PC-3 (cell line): ENCODE measurements at regions of chr1 and their contacts with region 1.

Region 1: DNA sequence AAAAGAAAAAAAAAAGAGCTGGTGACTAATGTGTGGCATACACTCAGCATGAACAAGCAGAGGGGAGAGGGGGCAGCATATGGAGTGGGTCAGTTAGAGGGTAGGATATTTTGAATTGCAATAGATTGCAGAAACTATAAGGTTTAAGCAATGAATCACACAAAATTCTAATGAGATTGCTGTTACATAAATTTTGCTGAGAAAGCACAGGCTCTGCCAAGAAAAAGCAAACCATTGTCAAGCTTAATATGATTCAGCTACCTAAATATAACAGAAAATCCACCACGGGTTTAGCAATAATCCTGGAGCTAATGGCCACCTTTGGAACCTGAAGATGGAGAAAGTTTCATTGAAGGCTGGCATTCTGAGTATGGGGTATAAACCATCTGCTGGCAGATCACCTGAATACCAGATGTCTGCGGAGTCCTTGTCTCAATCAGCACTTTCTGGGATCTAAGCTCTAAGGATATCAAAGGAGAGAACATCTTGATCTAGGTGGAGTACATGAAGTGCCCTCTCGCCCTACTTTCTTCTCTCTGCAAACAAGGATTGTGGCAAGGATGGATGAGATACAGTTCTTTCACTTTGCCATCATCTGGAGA is 30.3 kb upstream of the ANGPTL7 start:
- DNase-seq: peak; percentile 92
- ATAC-seq: peak; percentile 77
- H3K4me3 ChIP-seq: no peak overlapping the region
- H3K27ac ChIP-seq: peak overlapping the region; percentile 86
- H3K4me1 ChIP-seq: peaks cover 39% of the 10 kb centered on the region
- H3K27me3 ChIP-seq: no peaks in the 10 kb centered on the region
- CTCF ChIP-seq: no peak

Region 2: GRCh38 chr1:11012250-11013171 is 146.3 kb before region 1 on chr1 and contains the start of gene TARDBP:
- CTCF ChIA-PET with region 1: no interaction called
- POLR2A ChIA-PET with region 1: no interaction called
- intact Hi-C with region 1: no loop called
- DNase-seq: peak; percentile 83
- ATAC-seq: peak; percentile 89
- H3K4me3 ChIP-seq: peak within 1 kb of the TSS; percentile 95
- H3K27ac ChIP-seq: peak within 1 kb of the TSS; percentile 81
- H3K4me1 ChIP-seq: peaks cover 15% of the 10 kb centered on the region
- H3K27me3 ChIP-seq: no peaks in the 10 kb centered on the region
- CTCF ChIP-seq: no peak
- total RNA-seq, gene TARDBP: 78.5 and 102 TPM in 2 replicates

Region 3: GRCh38 chr1:11099310-11100149 is 59.3 kb before region 1 on chr1 and contains the start of gene EXOSC10:
- CTCF ChIA-PET with region 1: interaction called, 3 read pairs
- POLR2A ChIA-PET with region 1: no interaction called
- intact Hi-C with region 1: loop called (anchors 2 kb)
- DNase-seq: peak; percentile 91
- ATAC-seq: peak; percentile 93
- H3K4me3 ChIP-seq: peak within 1 kb of the TSS; percentile 81
- H3K27ac ChIP-seq: peak within 1 kb of the TSS; percentile 44
- H3K4me1 ChIP-seq: peaks cover 16% of the 10 kb centered on the region
- H3K27me3 ChIP-seq: no peaks in the 10 kb centered on the region
- CTCF ChIP-seq: no peak
- total RNA-seq, gene EXOSC10: 95.9 and 96.3 TPM in 2 replicates

Region 4: GRCh38 chr1:11114966-11115365 is 43.9 kb before region 1 on chr1:
- CTCF ChIA-PET with region 1: no interaction called
- POLR2A ChIA-PET with region 1: no interaction called
- intact Hi-C with region 1: no loop called
- DNase-seq: no peak
- ATAC-seq: no peak
- H3K4me3 ChIP-seq: no peak overlapping the region
- H3K27ac ChIP-seq: no peak overlapping the region
- H3K4me1 ChIP-seq: no peaks in the 10 kb centered on the region
- H3K27me3 ChIP-seq: no peaks in the 10 kb centered on the region
- CTCF ChIP-seq: no peak

Region 5: GRCh38 chr1:11147197-11147770 is 11.5 kb before region 1 on chr1:
- CTCF ChIA-PET with region 1: interaction called, 10 read pairs
- POLR2A ChIA-PET with region 1: interaction called, 3 read pairs
- intact Hi-C with region 1: loop called (anchors 1 kb)
- DNase-seq: peak; percentile 93
- ATAC-seq: peak; percentile 92
- H3K4me3 ChIP-seq: no peak overlapping the region
- H3K27ac ChIP-seq: peak overlapping the region; percentile 84
- H3K4me1 ChIP-seq: peaks cover 41% of the 10 kb centered on the region
- H3K27me3 ChIP-seq: no peaks in the 10 kb centered on the region
- CTCF ChIP-seq: no peak

Region 6: DNA sequence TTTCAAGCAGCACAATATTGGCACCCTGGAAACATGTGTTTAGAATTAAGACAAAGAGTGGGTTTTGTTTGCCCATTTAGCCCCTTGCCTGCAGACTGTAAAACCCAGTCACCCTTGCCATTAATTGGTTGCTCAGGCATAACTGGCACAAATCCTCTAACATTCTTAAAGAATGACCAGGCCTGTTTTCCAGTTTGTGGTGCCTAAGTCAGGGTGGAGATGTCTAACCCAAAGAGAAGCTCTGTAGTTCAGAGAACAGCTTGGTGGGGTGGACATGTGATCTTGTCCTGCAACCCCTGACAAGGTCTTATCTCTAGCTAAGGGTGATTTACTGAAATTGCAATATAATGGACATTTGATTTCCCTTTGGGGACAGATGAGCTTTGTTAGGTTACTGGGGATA is 21.5 kb after region 1 on chr1:
- CTCF ChIA-PET with region 1: interaction called, 3 read pairs
- POLR2A ChIA-PET with region 1: no interaction called
- intact Hi-C with region 1: loop called (anchors 2 kb)
- DNase-seq: peak; percentile 86
- ATAC-seq: peak; percentile 79
- H3K4me3 ChIP-seq: no peak overlapping the region
- H3K27ac ChIP-seq: peak overlapping the region; percentile 55
- H3K4me1 ChIP-seq: peaks cover 34% of the 10 kb centered on the region
- H3K27me3 ChIP-seq: no peaks in the 10 kb centered on the region
- CTCF ChIP-seq: no peak